SK-N-SH (cell line): ENCODE measurements at regions of chr2 and their contacts with region 1.

Region 1: DNA sequence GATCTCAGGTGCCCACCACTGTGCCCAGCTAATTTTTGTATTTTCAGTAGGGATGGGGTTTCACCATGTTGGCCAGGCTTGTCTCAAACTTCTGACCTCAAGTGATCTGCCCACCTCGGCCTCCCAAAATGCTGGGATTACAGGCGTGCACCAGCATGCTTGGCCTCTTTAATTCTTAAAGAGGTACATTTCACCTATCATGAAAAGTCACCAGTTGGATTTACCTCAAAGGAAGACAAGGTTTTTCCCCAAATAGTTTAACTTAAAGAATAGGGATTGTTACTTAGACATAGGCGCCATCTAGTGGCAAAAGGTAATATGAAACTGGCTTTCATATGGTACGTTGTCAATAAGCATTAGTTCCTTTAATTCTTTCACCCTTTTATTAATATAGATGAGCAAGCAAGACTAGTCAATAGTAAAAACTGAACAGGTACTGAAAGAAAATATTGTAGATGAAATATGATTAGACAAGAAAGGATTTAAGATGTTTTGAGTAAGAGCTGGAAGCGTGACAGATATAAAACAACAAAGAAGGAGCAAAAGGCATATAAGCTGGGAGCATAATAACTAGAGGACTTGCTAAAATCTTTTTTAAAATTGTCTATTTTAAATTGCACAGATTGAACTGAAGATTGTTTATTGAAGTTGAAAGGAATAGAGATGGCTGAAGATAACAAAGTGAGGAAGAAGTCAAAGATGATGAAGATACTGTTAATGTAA is 35.0 kb upstream of the PSMD14 start:
- DNase-seq: peak; percentile 45
- H3K4me3 ChIP-seq: no peak overlapping the region
- H3K27ac ChIP-seq: no peak overlapping the region
- H3K4me1 ChIP-seq: no peaks in the 10 kb centered on the region
- H3K27me3 ChIP-seq: no peaks in the 10 kb centered on the region; the same call in 1 of the 2 replicates
- CTCF ChIP-seq: peak; percentile 88
- EP300 ChIP-seq: no peak
- RAD21 ChIP-seq: peak; percentile 79

Region 2: GRCh38 chr2:161238560-161239325 is 34.5 kb before region 1 on chr2:
- CTCF ChIA-PET with region 1: interaction called, 15 read pairs
- POLR2A ChIA-PET with region 1: no interaction called
- DNase-seq: peak; percentile 80
- H3K4me3 ChIP-seq: peak overlapping the region; percentile 52 to 59
- H3K27ac ChIP-seq: no peak overlapping the region
- H3K4me1 ChIP-seq: peaks cover 5 to 11% of the 10 kb centered on the region in 2 experiments; a peak in 2 of 4 replicates
- H3K27me3 ChIP-seq: no peaks in the 10 kb centered on the region
- CTCF ChIP-seq: no peak
- EP300 ChIP-seq: no peak
- RAD21 ChIP-seq: no peak

Region 3: GRCh38 chr2:161344692-161345091 is 71.5 kb after region 1 on chr2:
- CTCF ChIA-PET with region 1: no interaction called
- POLR2A ChIA-PET with region 1: no interaction called
- DNase-seq: no peak
- H3K4me3 ChIP-seq: no peak overlapping the region
- H3K27ac ChIP-seq: no peak overlapping the region
- H3K4me1 ChIP-seq: peaks cover 0 to 12% of the 10 kb centered on the region in 2 experiments; a peak in 2 of 4 replicates
- H3K27me3 ChIP-seq: no peaks in the 10 kb centered on the region
- CTCF ChIP-seq: no peak
- EP300 ChIP-seq: no peak
- RAD21 ChIP-seq: no peak